ENCODE measurements at regions of chr5 and their contacts with region 1.

Region 1: DNA sequence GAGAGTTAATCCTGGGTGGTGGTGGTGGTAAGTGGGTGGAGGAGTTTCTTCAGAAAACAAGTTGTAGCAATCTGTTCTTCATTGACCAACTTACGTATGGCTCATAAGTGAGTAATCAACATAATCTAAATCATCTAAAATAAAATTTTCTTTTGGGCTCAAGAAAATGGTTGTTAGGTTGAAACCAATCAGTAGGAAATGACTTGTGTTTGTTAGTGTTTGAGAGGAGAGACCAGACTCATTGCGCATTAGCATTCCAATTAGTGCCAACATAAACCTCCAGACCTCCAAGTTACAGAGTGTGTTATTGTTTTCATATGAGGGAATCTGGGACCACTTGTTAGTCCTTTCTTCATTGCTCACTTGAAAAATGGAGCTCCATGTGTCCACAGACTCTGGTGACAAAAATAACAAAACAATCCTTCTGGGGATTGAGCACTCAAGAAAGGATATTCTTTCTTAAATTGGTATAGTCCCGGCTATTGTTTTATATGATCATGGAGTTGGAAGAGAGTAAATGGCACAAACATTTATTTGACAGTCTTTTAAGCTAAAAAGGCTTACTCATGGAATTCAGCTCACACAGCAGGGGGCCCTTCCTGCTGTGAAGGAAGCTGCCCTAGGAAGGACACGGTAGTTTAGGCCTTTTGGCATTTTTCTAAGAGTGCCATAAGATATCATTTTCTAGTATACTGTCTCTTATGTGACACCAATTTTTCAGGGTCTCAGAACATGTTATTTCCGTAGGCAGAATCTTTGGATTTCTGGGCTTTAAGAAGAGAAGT is 441.1 kb downstream of the EBF1 start:
- DNase-seq: no peak
- H3K4me3 ChIP-seq: no peak overlapping the region
- H3K27ac ChIP-seq: no peak overlapping the region
- H3K4me1 ChIP-seq: no peaks in the 10 kb centered on the region
- CTCF ChIP-seq: no peak

Region 2: DNA sequence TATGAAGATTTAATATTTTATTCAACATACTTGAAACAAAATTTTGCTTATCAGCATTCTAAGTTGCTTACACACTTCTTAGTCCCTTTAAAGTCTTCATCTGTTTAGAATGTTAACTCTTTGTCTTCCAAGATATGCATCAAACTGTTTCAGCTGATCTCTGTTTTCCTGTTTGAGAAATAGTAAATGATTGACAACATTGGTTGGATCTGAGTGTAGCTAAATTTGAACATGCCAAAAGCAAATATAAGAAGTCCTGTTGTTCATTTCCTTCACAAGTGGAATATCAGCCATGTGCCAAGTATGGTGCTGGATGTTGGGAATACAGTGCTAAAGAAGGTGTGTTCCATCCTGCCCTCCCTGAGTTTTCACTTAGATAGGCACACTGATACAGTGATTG is 10.6 kb after region 1 on chr5:
- CTCF ChIA-PET with region 1: no interaction called
- POLR2A ChIA-PET with region 1: interaction called, 17 read pairs
- intact Hi-C with region 1: no loop called
- DNase-seq: no peak
- H3K4me3 ChIP-seq: no peak overlapping the region
- H3K27ac ChIP-seq: no peak overlapping the region
- H3K4me1 ChIP-seq: peaks cover 9% of the 10 kb centered on the region
- CTCF ChIP-seq: no peak